ENCODE measurements at regions of chr1 and their contacts with region 1.

Region 1: DNA sequence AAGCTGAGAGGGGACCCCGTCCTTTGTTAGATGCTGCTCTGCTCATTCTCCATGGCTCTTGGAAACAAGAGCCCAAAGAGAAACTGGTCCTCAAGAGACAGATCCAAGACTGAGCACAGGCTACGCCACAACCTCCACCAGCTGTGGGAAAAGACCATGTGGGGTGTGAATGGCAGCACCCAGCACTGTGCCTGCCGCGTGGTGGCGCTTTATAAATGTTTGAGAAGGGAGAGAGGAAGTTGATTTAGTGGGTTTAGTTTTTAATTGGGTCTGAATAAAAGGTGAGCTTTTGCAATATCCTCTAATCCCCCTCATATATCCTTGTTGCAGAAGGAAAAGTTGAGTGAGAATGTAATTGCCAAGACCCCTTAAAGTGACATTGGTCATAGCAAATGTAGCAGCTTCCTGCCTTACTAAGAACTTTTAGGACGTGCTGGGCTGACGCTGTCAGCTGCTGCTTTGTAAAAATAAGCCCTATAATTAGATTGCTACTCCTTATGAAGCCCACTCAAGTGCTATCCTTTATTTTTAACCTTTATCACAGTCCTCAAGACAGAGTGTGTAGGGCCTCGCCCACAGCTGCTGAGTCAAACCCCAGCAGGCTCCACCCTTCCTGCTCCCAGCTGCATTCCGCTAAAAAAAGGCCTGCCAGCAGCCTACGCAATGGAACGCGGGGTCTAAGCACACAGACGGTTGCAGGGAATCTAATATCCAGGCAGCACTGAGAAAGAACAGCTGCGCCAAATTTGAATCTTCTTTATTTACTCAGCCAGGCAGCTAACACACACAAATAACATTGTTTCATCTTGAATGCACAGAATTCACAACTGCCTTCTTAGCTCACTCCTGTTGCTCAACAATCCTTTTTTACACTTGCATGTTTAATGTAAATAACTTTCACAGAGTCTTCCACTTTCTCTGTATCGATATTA is 47.4 kb upstream of the PRDX6 start:
- DNase-seq: peak; percentile 40
- H3K4me3 Mint-ChIP-seq: peak overlapping the region; percentile 40
- H3K27ac Mint-ChIP-seq: peak overlapping the region; percentile 93
- H3K4me1 Mint-ChIP-seq: peaks cover 28% of the 10 kb centered on the region
- H3K27me3 Mint-ChIP-seq: no peaks in the 10 kb centered on the region

Region 2: DNA sequence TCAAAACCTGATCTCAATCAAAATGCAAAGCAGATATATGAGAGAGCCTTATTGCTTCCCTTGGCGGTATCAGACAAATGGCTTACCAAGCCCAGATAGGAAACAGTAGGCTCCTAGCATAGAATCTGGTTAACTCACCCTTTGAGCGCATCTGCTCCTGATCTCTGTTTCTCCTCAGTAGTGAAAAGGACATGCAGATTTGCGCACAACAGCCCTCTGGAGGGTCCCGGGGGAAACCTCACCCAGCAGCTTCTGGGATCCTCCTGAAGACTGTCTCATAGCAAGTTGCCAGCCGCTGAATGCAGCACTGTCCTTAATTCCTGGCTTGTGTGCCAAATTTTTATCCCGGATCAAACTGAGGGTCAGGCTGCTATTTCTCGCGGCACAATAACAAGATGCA is 578.7 kb before region 1 on chr1:
- intact Hi-C with region 1: no loop called
- DNase-seq: no peak
- H3K4me3 Mint-ChIP-seq: no peak overlapping the region
- H3K27ac Mint-ChIP-seq: no peak overlapping the region
- H3K4me1 Mint-ChIP-seq: peaks cover 9% of the 10 kb centered on the region
- H3K27me3 Mint-ChIP-seq: peaks cover 43% of the 10 kb centered on the region

Region 3: GRCh38 chr1:173023343-173023742 is 406.4 kb before region 1 on chr1:
- intact Hi-C with region 1: no loop called
- DNase-seq: no peak
- H3K4me3 Mint-ChIP-seq: no peak overlapping the region
- H3K27ac Mint-ChIP-seq: no peak overlapping the region
- H3K4me1 Mint-ChIP-seq: no peaks in the 10 kb centered on the region
- H3K27me3 Mint-ChIP-seq: no peaks in the 10 kb centered on the region

Region 4: DNA sequence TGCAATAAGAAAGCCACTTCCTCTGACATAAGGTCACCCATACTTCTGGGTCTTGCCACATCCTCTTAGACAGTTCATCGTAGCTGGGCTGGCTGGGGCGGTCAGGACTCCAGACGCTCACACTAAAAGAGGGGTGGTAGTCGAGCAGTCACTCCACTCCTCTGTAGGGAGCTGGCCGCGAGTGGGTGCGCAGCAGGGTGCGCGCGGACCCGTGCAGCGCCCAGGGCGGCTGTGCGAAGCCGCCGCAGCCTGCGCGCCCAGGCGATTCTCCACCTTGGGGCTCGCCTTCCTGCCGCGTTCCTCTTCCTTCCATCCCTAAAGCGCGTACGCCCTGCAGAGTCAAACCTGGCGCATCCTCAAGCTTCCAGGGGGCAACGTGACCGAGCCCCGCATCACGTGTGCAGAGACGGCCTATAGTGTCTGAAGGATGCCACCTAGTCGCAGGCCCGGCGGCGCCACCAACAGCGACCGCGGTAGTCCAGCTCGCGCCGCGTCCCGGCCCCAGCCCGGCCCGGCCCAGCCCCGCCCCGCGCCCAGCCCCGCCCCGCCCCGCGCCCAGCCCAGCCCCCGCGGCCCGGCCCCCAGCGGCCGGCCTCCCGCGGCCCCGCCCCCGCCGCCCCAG is 47.0 kb after region 1 on chr1:
- intact Hi-C with region 1: loop called (anchors 1 kb)
- DNase-seq: peak; percentile 74
- H3K4me3 Mint-ChIP-seq: peak overlapping the region; percentile 92
- H3K27ac Mint-ChIP-seq: peak overlapping the region; percentile 93
- H3K4me1 Mint-ChIP-seq: peaks cover 65% of the 10 kb centered on the region
- H3K27me3 Mint-ChIP-seq: no peaks in the 10 kb centered on the region

Region 5: DNA sequence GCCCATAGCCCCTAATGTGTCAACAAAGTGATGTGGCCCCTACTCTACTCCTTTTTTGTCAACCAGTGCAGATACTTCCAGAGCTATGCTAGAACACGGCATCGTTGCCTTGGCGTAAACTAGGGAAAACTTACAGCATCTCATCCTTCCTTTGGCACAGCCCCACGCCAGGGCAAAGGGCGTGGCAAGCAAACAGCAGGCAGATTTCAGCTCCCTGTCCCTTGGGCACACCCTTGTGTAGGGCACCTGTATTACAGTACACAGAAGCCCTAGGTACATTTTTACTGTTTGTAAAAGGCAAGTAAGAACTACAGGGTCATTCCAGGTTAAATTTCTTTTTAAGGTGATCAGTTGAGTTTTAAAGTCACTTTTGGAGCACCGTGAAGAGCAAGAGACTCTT is 76.7 kb after region 1 on chr1:
- intact Hi-C with region 1: loop called (anchors 1 kb)
- DNase-seq: no peak
- H3K4me3 Mint-ChIP-seq: no peak overlapping the region
- H3K27ac Mint-ChIP-seq: no peak overlapping the region
- H3K4me1 Mint-ChIP-seq: no peaks in the 10 kb centered on the region
- H3K27me3 Mint-ChIP-seq: no peaks in the 10 kb centered on the region

Region 6: GRCh38 chr1:173714759-173715537 is 285.2 kb after region 1 on chr1 and contains the start of gene KLHL20:
- intact Hi-C with region 1: loop called (anchors 1 kb)
- DNase-seq: peak; percentile 84
- H3K4me3 Mint-ChIP-seq: peak within 1 kb of the TSS; percentile 93
- H3K27ac Mint-ChIP-seq: peak within 1 kb of the TSS; percentile 98
- H3K4me1 Mint-ChIP-seq: peaks cover 30% of the 10 kb centered on the region
- H3K27me3 Mint-ChIP-seq: peaks cover 14% of the 10 kb centered on the region
- total RNA-seq, gene KLHL20: 17.8 and 18.3 TPM in 2 replicates

Region 7: GRCh38 chr1:173867753-173868265 is 438.1 kb after region 1 on chr1 and contains the start of gene GAS5:
- intact Hi-C with region 1: loop called (anchors 2 kb)
- DNase-seq: peak; percentile 99
- H3K4me3 Mint-ChIP-seq: peak within 1 kb of the TSS; percentile 98
- H3K27ac Mint-ChIP-seq: peak within 1 kb of the TSS; percentile 98
- H3K4me1 Mint-ChIP-seq: peaks cover 66% of the 10 kb centered on the region
- H3K27me3 Mint-ChIP-seq: no peaks in the 10 kb centered on the region
- total RNA-seq, gene GAS5: 653 and 688 TPM in 2 replicates

Region 8: DNA sequence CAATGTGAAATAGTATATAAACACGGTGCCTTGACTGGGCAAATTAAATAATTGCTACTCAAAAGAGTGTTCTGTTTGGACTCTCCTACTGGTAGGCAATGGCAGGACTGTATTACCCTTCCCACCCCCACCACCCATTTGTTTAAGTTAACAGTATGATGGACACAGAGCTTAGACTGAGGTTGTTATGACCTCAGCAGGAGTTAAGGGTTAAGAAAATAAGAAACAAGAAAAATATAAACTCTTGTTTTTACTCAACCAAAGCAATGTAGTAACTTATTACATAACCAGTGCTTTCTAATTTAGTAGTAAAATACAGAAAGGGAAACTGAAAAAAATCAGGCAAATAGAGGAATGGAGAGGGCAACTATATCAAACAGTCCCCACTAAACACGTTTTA is 507.3 kb after region 1 on chr1:
- intact Hi-C with region 1: loop called (anchors 10 kb)
- DNase-seq: no peak
- H3K4me3 Mint-ChIP-seq: no peak overlapping the region
- H3K27ac Mint-ChIP-seq: no peak overlapping the region
- H3K4me1 Mint-ChIP-seq: peaks cover 5% of the 10 kb centered on the region
- H3K27me3 Mint-ChIP-seq: no peaks in the 10 kb centered on the region

Region 9: DNA sequence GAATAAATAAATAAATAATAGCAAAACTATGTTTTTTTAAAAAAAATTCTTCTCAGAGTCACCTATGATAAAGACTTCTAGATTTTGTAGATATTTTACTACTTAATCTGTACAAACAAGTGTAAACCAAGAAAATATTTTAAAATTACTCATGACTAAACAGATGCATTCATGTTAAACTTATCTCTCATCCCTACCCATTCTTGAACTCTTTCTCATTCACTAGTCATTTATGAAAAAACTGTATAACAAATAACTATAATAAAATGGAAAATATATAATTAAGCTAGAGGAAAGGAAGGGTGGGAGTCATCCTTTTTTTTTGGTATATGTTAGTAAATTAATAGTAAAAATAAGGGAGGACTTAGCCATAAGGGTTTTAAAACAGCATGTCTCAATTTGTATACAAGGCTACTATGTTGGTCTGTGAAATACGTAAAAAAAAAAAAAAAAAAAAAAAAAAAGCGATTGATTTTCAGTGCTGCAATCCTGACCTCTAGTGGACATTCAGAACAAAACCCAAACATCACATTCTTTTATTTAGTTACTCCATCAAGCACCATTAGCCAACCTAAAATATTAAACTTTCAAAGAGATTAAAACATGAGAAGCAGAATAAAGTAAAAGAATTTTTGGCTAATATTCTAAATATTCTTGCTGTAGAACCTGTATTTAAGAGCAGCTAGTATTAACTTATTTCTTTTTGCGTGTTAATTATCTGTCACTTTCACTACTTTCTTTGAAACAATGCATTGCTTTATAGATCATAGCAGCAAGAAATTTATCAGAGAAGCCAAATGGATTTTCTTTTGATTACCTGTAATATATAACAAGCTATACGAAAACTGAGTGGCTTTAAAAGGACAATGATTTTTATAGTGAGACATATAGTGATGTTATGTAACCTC is 1314.2 kb after region 1 on chr1:
- intact Hi-C with region 1: loop called (anchors 5 kb)
- DNase-seq: no peak
- H3K4me3 Mint-ChIP-seq: no peak overlapping the region
- H3K27ac Mint-ChIP-seq: no peak overlapping the region
- H3K4me1 Mint-ChIP-seq: no peaks in the 10 kb centered on the region
- H3K27me3 Mint-ChIP-seq: peaks cover 2% of the 10 kb centered on the region